ENCODE measurements at regions of chr16 and their contacts with region 1.

Region 1: DNA sequence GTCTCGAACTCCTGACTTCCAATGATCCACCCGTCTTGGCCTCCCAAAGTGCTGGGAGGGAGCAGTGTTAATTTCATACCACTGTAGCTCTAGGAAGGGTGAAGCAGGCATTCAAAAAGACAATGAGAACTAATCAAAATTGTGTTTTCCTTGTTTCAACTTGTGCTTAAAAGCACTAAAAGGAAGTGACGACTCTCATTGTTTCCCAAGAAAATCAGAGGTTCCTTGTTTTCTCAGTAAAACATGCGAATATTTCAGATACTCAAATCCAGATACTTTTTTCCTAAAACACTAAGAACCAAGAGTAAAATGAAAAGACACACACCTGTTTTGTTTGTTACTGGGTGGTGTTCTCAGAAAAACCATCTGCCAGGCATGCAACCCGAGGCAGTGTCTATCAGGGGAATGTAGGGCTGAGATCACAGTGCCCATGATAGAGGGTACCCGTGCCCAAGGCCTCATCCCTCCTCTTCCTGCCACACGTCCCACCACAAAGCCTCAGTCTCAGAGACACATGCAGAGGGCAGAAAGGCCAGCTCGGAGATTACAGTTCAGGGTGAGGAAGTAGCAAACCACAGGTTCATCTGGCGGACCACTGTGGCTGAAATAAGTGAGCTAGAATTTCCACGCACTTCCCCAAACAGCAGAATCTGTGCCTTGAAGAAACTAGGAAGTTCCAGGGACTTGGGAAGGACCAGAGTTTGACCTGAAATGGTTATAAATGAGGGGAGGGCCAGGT is 33.7 kb downstream of the GINS3 start:
- DNase-seq: no peak
- ATAC-seq: no peak
- H3K4me3 ChIP-seq: no peak overlapping the region
- H3K27ac ChIP-seq: no peak overlapping the region
- H3K4me1 ChIP-seq: peaks cover 11% of the 10 kb centered on the region
- H3K27me3 ChIP-seq: no peaks in the 10 kb centered on the region
- CTCF ChIP-seq: no peak

Region 2: GRCh38 chr16:58306327-58306726 is 119.6 kb before region 1 on chr16:
- CTCF ChIA-PET with region 1: interaction called, 10 read pairs
- POLR2A ChIA-PET with region 1: no interaction called
- intact Hi-C with region 1: no loop called
- DNase-seq: peak; percentile 11
- ATAC-seq: no peak
- H3K4me3 ChIP-seq: no peak overlapping the region
- H3K27ac ChIP-seq: no peak overlapping the region
- H3K4me1 ChIP-seq: no peaks in the 10 kb centered on the region
- H3K27me3 ChIP-seq: no peaks in the 10 kb centered on the region
- CTCF ChIP-seq: peak; percentile 50

Region 3: GRCh38 chr16:58629572-58630104 is 203.7 kb after region 1 on chr16 and contains the start of gene CNOT1:
- CTCF ChIA-PET with region 1: no interaction called
- POLR2A ChIA-PET with region 1: no interaction called
- intact Hi-C with region 1: no loop called
- DNase-seq: peak; percentile 95
- ATAC-seq: peak; percentile 88
- H3K4me3 ChIP-seq: peak within 1 kb of the TSS; percentile 91
- H3K27ac ChIP-seq: peak within 1 kb of the TSS; percentile 72
- H3K4me1 ChIP-seq: no peaks in the 10 kb centered on the region; the same call in 1 of the 2 replicates
- H3K27me3 ChIP-seq: no peaks in the 10 kb centered on the region
- CTCF ChIP-seq: no peak
- total RNA-seq, gene CNOT1: 132 and 135 TPM in 2 replicates

Measured in PC-3 (cell line).